Activated B cell treated with CpG ODN at 0.5 μM for 24 hours (primary cell): ENCODE measurements at regions of chr7 and their contacts with region 1.

Region 1: DNA sequence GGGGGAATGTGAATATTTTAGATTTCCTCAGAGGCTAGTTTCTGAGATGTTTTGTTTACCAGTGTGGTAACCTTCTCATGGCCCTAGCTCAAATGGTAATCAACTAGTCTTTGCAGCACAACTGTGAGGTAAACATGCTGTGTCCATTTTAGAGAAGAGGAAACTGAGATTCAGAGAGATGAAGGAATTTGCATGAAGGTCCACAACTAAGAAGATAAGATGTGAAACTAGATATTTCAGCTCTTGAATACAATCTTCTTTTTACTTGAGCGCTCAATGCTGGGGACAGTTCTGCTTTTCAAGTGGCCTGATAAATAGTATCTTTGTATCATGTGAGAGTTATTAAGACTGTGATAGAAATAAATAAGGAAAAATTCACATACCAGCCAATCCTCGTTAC is 245.4 kb downstream of the AUTS2 start:
- DNase-seq: no peak
- ATAC-seq: peak; percentile 37
- H3K4me3 Mint-ChIP-seq: peak overlapping the region; percentile 12
- H3K27ac Mint-ChIP-seq: peak overlapping the region; percentile 59
- H3K4me1 Mint-ChIP-seq: peaks cover 76% of the 10 kb centered on the region
- H3K27me3 Mint-ChIP-seq: no peaks in the 10 kb centered on the region
- CTCF ChIP-seq: no peak

Region 2: DNA sequence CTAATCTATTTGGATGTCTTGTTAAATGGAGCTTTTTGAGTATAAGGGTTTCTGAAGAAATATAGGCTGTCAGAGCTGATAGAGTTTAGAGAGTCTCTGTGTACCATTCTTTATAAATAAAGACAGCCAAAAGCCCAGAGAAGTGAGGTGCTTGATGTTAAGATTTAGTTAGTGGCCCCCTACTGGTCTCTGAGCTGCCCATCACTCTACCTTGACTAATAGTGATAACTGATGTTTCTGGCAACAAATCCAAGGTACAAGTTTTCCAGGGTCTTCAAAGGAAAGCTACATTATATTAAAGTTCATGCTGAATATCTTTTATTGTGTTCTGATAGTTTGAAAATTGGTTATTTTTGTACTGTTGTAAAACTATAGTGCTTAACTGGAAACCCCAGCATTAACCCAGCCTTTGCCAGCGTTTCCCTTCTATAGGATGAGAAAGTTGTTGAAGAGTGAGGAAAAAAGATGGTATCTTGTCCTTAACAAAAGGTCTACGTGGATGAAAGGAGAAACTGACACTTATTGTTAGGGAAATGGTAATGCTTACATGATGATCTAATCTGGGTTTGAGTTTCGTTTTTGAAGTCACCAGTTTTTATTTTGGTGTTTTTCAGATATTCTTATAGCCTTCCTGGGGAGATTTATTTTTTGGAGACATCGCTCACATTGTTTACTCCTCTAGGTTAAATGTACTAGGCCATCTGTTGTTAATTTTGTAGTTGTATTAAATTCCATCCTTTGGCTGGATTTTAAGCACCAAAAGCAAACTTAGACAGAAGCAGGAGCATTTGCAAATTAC is 166.4 kb before region 1 on chr7:
- CTCF ChIA-PET with region 1: no interaction called
- POLR2A ChIA-PET with region 1: no interaction called
- intact Hi-C with region 1: no loop called
- DNase-seq: no peak
- ATAC-seq: no peak
- H3K4me3 Mint-ChIP-seq: no peak overlapping the region
- H3K27ac Mint-ChIP-seq: no peak overlapping the region
- H3K4me1 Mint-ChIP-seq: peaks cover 9% of the 10 kb centered on the region
- H3K27me3 Mint-ChIP-seq: no peaks in the 10 kb centered on the region
- CTCF ChIP-seq: no peak

Region 3: DNA sequence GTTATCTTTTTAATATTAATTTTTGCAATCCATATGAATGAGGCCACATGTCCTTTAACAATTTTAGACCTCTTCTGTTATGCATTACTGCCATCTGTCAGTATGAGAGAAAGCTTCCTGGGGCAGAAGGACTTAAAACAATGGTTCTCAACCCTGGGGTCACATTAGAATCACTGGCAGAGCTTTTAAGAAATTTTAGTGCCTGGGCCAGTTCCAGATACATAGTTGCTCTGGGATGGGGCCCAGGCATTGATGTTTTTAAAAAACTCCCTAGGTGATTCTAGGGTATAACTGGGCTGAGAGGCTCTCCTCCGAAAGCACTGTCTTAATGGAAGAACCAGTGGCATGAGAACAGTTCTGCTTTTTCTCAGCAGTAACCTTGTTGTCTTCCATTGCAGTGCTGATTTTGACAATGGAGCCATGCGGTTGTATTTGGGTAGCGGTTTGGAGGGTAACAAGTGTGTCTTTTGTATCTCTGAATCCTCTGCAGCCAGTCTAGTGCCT is 18.5 kb before region 1 on chr7:
- CTCF ChIA-PET with region 1: interaction called, 8 read pairs
- POLR2A ChIA-PET with region 1: interaction called, 19 read pairs
- intact Hi-C with region 1: loop called (anchors 1 kb)
- DNase-seq: no peak
- ATAC-seq: peak; percentile 18
- H3K4me3 Mint-ChIP-seq: peak overlapping the region; percentile 90
- H3K27ac Mint-ChIP-seq: peak overlapping the region; percentile 96
- H3K4me1 Mint-ChIP-seq: peaks cover 72% of the 10 kb centered on the region
- H3K27me3 Mint-ChIP-seq: no peaks in the 10 kb centered on the region
- CTCF ChIP-seq: no peak